Activated naive CD4-positive, alpha-beta T cell treated with anti-CD3 and anti-CD28 coated beads for 36 hours (primary cell): ENCODE measurements at regions of chr2 and their contacts with region 1.

Region 1: GRCh38 chr2:37376421-37377186 is 32.2 kb downstream of the QPCT start:
- DNase-seq: peak; percentile 67
- H3K4me3 Mint-ChIP-seq: no peak overlapping the region
- H3K27ac Mint-ChIP-seq: no peak overlapping the region
- H3K4me1 Mint-ChIP-seq: peaks cover 34% of the 10 kb centered on the region
- H3K27me3 Mint-ChIP-seq: peaks cover 45% of the 10 kb centered on the region

Region 2: GRCh38 chr2:37083873-37084794 is 292.5 kb before region 1 on chr2 and contains the starts of genes GPATCH11 and HEATR5B:
- CTCF ChIA-PET with region 1: no interaction called
- intact Hi-C with region 1: loop called (anchors 5 kb)
- DNase-seq: peak; percentile 93
- H3K4me3 Mint-ChIP-seq: no peak within 1 kb of the TSS
- H3K27ac Mint-ChIP-seq: no peak within 1 kb of the TSS
- H3K4me1 Mint-ChIP-seq: peaks cover 26% of the 10 kb centered on the region
- H3K27me3 Mint-ChIP-seq: no peaks in the 10 kb centered on the region
- total RNA-seq, gene GPATCH11: 9.8 to 10.4 TPM
- total RNA-seq, gene HEATR5B: 15.5 to 15.8 TPM

Region 3: DNA sequence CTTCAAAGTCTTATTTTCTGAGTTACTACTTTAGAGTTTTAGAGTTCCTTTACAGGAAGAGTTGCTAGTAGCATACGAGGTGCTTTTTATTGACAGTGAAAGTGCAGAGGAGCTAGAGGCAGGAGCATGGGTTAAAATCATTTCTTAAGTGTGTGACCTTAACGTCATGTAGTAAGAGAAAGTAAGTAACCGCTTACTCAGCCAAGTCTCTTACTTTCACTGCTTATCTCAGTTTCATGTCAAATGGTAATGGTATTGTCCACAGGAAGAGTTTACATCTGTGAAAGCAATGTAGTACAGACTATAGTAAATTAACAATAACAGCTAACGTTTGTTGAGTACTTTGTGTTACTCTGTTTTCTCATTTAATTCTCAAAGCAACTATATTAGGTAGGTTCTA is 132.6 kb before region 1 on chr2:
- CTCF ChIA-PET with region 1: no interaction called
- intact Hi-C with region 1: loop called (anchors 1 kb)
- DNase-seq: no peak
- H3K4me3 Mint-ChIP-seq: no peak overlapping the region
- H3K27ac Mint-ChIP-seq: peak overlapping the region; percentile 65
- H3K4me1 Mint-ChIP-seq: peaks cover 13% of the 10 kb centered on the region
- H3K27me3 Mint-ChIP-seq: no peaks in the 10 kb centered on the region

Region 4: GRCh38 chr2:37365669-37366068 is 10.9 kb before region 1 on chr2:
- CTCF ChIA-PET with region 1: interaction called, 14 read pairs
- intact Hi-C with region 1: loop called (anchors 1 kb)
- DNase-seq: peak; percentile 27
- H3K4me3 Mint-ChIP-seq: no peak overlapping the region
- H3K27ac Mint-ChIP-seq: no peak overlapping the region
- H3K4me1 Mint-ChIP-seq: peaks cover 3% of the 10 kb centered on the region
- H3K27me3 Mint-ChIP-seq: peaks cover 26% of the 10 kb centered on the region

Region 5: DNA sequence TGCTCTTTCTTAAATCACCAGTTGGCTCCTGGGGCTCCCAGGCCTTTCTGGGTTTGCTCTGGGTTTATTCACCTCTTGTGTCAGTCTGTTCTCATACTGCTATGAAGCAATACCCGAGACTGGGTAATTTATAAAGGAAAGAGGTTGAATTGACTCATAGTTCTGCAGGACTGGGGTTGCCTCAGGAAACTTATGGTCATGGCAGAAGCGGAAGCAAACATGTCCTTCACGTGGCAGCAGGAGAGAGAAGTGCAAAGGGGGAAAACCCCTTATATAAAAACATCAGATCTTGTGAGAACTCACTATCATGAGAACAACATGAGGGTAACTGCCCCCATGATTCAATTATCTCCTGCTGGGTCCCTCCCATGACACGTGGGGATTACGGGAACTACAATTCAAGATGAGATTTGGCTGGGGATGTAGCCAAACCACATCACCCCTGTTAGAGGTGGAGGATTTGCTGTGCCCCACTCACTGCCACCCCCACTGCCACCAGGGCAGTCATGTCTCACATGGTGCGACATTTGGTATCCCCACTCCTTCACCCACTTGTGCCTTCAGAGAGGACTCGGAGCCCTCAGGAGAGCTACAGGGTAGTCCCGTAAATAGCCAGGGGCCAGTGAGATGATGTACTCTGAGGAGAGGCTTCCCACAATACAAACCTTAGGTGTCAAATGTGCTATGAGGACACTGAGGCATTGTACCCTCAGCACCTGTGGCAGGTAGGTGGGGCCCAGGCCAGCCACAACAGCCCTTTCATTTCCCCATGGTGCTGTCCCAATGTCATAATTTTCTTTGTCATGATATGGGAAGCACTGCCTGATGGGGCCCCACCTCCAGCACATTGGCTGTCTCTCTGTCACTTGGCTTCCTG is 259.1 kb after region 1 on chr2:
- CTCF ChIA-PET with region 1: no interaction called
- intact Hi-C with region 1: loop called (anchors 1 kb)
- DNase-seq: peak; percentile 85
- H3K4me3 Mint-ChIP-seq: no peak overlapping the region
- H3K27ac Mint-ChIP-seq: peak overlapping the region; percentile 90
- H3K4me1 Mint-ChIP-seq: peaks cover 49% of the 10 kb centered on the region
- H3K27me3 Mint-ChIP-seq: no peaks in the 10 kb centered on the region

Region 6: DNA sequence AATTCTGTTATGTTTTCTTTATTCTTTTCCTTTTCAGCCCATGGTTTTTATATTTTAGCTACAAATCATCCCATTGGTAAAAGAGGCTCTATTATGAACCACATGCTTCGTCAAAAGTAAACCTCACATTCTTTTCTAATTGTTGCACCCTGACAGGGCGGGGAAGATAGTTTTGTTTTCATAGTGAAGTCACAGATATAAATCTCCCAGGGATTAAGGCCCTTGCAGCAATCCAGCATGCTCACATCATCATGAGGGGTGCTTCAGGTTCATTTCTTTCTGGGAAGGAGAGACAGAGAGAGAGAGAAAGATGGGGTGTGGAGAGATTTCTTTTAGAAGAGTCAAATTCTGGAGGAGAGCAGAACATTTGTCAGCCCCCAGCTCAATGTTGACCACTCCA is 419.3 kb after region 1 on chr2:
- CTCF ChIA-PET with region 1: no interaction called
- intact Hi-C with region 1: no loop called
- DNase-seq: no peak
- H3K4me3 Mint-ChIP-seq: no peak overlapping the region
- H3K27ac Mint-ChIP-seq: no peak overlapping the region
- H3K4me1 Mint-ChIP-seq: no peaks in the 10 kb centered on the region
- H3K27me3 Mint-ChIP-seq: no peaks in the 10 kb centered on the region

Region 7: DNA sequence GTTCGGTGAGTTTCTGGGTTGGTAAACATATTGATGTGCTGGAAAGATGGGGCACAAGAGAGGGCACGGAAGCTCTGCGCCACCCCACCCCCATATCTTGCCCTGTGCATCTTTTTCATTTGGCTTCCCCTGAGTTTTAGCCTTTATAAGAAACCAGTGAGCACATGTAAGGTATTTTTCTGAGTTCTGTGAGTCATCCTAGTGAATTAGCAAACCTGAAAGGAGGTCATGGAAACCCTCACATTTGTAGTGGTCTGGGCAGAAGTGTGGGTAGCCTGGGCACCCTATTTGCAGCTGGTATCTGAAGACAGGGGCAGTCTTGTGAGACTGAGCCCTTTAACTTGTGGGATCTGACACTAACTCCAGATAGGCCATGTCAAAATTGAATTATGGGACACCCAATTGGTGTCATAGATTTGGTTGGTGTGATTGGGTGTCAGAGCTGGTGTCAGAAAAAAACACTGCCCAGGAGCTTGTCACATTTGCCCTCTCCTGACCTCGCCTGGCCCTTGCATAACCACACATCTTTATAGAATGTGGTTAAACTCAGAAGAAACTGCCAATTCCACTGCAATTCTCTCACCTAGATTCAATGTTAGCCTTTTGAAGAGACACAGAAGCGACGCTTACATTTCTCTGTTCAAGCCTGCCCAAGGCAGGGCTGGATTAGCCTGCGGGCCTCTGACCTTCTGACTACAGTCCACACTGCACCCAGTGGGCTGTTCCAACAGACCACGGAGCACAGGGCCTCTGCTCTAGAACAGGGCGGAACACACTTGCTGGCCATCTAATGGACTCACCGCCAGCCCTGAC is 1277.3 kb after region 1 on chr2:
- CTCF ChIA-PET with region 1: no interaction called
- intact Hi-C with region 1: loop called (anchors 5 kb)
- DNase-seq: peak; percentile 83
- H3K4me3 Mint-ChIP-seq: peak overlapping the region; percentile 43
- H3K27ac Mint-ChIP-seq: peak overlapping the region; percentile 90
- H3K4me1 Mint-ChIP-seq: peaks cover 37% of the 10 kb centered on the region
- H3K27me3 Mint-ChIP-seq: no peaks in the 10 kb centered on the region